MCF 10A (cell line): ENCODE measurements at regions of chr10 and their contacts with region 1.

Region 1: DNA sequence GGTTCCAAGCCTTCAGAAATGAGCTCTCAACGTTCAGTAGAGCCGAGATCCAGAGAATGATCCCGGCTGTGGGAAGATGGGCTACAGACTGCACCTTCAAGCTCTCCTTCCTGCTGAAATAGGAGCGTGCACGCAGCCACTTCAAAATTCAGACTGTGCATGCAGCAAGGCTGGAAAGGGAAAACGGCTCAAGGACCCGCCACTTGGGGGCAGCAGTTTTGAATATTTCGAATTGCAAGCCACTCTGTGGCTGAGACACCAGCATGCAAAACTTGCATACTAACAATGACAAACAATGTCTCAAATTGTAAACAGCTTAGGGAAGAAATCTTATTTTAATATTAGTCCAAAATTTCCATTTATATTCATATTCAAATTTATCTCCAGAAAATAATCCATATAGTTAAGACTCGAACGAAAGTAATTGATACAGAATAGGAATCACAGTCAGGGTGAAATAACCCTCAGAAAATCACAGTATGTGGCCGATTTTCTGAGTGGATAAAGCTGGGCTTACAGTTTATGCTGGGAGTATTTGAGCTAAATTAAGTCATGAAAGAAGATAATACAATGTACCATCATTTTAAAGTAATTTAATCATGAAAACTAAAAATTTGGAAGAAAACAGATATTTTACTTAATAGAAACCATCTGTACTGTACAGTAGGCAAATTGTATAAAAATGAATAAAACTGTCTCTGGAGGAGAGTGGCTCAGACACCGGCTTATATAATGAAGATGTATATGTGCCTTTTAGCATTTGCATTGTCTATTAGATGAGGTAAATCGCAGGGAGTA is 137.9 kb upstream of the MKI67 start:
- DNase-seq: peak; percentile 60
- H3K4me3 Mint-ChIP-seq: no peak overlapping the region
- H3K27ac Mint-ChIP-seq: no peak overlapping the region
- H3K4me1 Mint-ChIP-seq: no peaks in the 10 kb centered on the region
- H3K27me3 Mint-ChIP-seq: no peaks in the 10 kb centered on the region
- CTCF ChIP-seq: peak; percentile 64

Region 2: GRCh38 chr10:127679642-127680255 is 584.3 kb before region 1 on chr10:
- CTCF ChIA-PET with region 1: no interaction called
- POLR2A ChIA-PET with region 1: no interaction called
- intact Hi-C with region 1: no loop called
- DNase-seq: peak; percentile 27
- H3K4me3 Mint-ChIP-seq: no peak overlapping the region
- H3K27ac Mint-ChIP-seq: no peak overlapping the region
- H3K4me1 Mint-ChIP-seq: no peaks in the 10 kb centered on the region
- H3K27me3 Mint-ChIP-seq: peaks cover 24% of the 10 kb centered on the region
- CTCF ChIP-seq: peak; percentile 47

Region 3: GRCh38 chr10:128130051-128130450 is 134.0 kb before region 1 on chr10:
- CTCF ChIA-PET with region 1: no interaction called
- POLR2A ChIA-PET with region 1: no interaction called
- intact Hi-C with region 1: no loop called
- DNase-seq: peak; percentile 59
- H3K4me3 Mint-ChIP-seq: no peak overlapping the region
- H3K27ac Mint-ChIP-seq: peak overlapping the region; percentile 62
- H3K4me1 Mint-ChIP-seq: peaks cover 14% of the 10 kb centered on the region
- H3K27me3 Mint-ChIP-seq: no peaks in the 10 kb centered on the region
- CTCF ChIP-seq: no peak

Region 4: GRCh38 chr10:128451879-128452278 is 187.8 kb after region 1 on chr10:
- CTCF ChIA-PET with region 1: no interaction called
- POLR2A ChIA-PET with region 1: no interaction called
- intact Hi-C with region 1: no loop called
- DNase-seq: no peak
- H3K4me3 Mint-ChIP-seq: no peak overlapping the region
- H3K27ac Mint-ChIP-seq: no peak overlapping the region
- H3K4me1 Mint-ChIP-seq: no peaks in the 10 kb centered on the region
- H3K27me3 Mint-ChIP-seq: no peaks in the 10 kb centered on the region
- CTCF ChIP-seq: no peak

Region 5: DNA sequence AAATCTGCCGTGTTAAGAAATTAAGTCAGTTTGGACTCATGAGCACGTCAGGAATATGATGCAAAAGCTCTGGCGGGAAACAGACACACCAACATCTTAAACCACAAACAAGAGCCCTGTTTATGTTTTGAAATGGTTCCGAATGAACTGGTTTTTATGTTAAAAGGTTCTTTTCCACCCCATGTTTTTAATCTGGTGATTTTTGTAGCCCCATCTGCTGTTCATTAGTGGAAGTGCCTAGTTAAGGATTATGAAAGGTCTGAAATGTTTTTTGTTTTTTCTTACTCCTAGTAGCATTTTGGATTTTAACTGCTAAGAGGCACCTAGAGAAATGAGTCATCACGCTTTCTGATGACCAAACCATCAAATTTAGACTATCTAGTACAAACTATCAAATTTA is 266.2 kb after region 1 on chr10:
- CTCF ChIA-PET with region 1: interaction called, 9 read pairs
- POLR2A ChIA-PET with region 1: no interaction called
- intact Hi-C with region 1: loop called (anchors 2 kb)
- DNase-seq: peak; percentile 29
- H3K4me3 Mint-ChIP-seq: no peak overlapping the region
- H3K27ac Mint-ChIP-seq: no peak overlapping the region
- H3K4me1 Mint-ChIP-seq: no peaks in the 10 kb centered on the region
- H3K27me3 Mint-ChIP-seq: peaks cover 47% of the 10 kb centered on the region
- CTCF ChIP-seq: peak; percentile 27

Region 6: DNA sequence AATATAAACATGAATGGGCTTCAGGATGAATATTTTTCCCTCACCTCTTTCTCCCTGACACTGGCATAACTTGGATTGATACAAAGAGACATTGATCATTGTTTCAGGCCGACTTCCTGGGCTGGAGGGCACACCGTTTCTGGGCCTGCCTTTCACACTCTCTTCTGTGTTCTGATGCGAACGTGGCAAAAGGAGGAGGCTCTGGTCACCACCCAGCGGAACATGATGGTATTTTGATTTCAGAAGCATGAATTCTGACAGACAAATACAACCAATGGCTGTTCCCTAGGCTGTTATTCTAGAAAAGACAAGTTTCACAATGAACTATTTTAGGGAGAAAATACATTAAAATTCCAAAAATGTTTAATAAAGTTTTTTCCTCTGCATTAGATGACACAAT is 396.6 kb after region 1 on chr10:
- CTCF ChIA-PET with region 1: interaction called, 16 read pairs
- POLR2A ChIA-PET with region 1: no interaction called
- intact Hi-C with region 1: loop called (anchors 1 kb)
- DNase-seq: peak; percentile 40
- H3K4me3 Mint-ChIP-seq: no peak overlapping the region
- H3K27ac Mint-ChIP-seq: no peak overlapping the region
- H3K4me1 Mint-ChIP-seq: peaks cover 6% of the 10 kb centered on the region
- H3K27me3 Mint-ChIP-seq: peaks cover 13% of the 10 kb centered on the region
- CTCF ChIP-seq: peak; percentile 44

Region 7: GRCh38 chr10:128859738-128860386 is 595.8 kb after region 1 on chr10:
- CTCF ChIA-PET with region 1: interaction called, 18 read pairs
- POLR2A ChIA-PET with region 1: no interaction called
- intact Hi-C with region 1: loop called (anchors 5 kb)
- DNase-seq: peak; percentile 63
- H3K4me3 Mint-ChIP-seq: no peak overlapping the region
- H3K27ac Mint-ChIP-seq: no peak overlapping the region
- H3K4me1 Mint-ChIP-seq: peaks cover 3% of the 10 kb centered on the region
- H3K27me3 Mint-ChIP-seq: no peaks in the 10 kb centered on the region
- CTCF ChIP-seq: peak; percentile 40

Region 8: GRCh38 chr10:130127364-130128061 is 1863.4 kb after region 1 on chr10:
- CTCF ChIA-PET with region 1: interaction called, 3 read pairs
- POLR2A ChIA-PET with region 1: no interaction called
- intact Hi-C with region 1: loop called (anchors 5 kb)
- DNase-seq: peak; percentile 73
- H3K4me3 Mint-ChIP-seq: no peak overlapping the region
- H3K27ac Mint-ChIP-seq: no peak overlapping the region
- H3K4me1 Mint-ChIP-seq: peaks cover 6% of the 10 kb centered on the region
- H3K27me3 Mint-ChIP-seq: no peaks in the 10 kb centered on the region
- CTCF ChIP-seq: peak; percentile 87